Activated CD4-positive, alpha-beta memory T cell treated with anti-CD3 and anti-CD28 coated beads, Interleukin-2, amount 10 ng/mL, durations not matched to agents 7 days and 5 days (primary cell): ENCODE measurements at regions of chr20 and their contacts with region 1.

Region 1: DNA sequence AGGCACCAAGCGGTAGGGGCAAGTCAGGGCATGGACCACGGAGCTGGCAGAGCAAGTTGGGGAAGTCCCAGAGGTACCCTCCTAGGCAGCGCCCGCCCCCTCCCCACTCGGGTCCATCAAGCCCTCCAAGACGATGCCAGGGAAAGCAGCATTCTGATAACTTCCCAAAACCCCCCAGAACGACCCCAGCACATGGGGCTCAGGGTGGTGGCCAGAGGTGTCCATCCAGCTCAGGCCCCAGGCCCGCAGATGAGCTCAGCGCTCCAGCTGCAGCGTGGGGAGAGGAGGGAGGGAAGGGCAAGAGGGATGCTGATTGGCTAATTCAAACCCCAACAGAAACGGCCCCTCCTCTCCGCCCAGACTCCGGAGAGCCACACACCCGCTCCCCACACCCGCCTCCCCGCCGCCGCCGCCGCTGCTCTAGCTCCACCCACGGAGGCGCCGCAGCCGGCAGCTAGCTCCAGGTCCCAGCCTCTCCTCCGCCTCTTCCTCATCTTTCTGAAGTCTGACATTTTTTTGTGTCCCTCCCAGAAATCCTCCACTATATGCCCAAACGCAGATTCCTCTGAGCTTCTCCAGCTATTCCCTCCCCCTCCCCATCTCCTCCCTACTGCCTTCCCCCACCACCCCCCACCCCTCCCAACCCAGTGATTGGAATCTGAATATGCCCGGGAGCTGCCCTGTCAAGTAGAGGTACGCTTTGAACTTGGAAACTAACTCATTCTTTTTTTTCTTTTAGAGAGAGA is 40.3 kb upstream of the TLDC2 start:
- DNase-seq: peak; percentile 92
- H3K4me3 Mint-ChIP-seq: peak overlapping the region; percentile 82
- H3K27ac Mint-ChIP-seq: peak overlapping the region; percentile 87
- H3K4me1 Mint-ChIP-seq: peaks cover 27% of the 10 kb centered on the region
- H3K27me3 Mint-ChIP-seq: no peaks in the 10 kb centered on the region

Region 2: DNA sequence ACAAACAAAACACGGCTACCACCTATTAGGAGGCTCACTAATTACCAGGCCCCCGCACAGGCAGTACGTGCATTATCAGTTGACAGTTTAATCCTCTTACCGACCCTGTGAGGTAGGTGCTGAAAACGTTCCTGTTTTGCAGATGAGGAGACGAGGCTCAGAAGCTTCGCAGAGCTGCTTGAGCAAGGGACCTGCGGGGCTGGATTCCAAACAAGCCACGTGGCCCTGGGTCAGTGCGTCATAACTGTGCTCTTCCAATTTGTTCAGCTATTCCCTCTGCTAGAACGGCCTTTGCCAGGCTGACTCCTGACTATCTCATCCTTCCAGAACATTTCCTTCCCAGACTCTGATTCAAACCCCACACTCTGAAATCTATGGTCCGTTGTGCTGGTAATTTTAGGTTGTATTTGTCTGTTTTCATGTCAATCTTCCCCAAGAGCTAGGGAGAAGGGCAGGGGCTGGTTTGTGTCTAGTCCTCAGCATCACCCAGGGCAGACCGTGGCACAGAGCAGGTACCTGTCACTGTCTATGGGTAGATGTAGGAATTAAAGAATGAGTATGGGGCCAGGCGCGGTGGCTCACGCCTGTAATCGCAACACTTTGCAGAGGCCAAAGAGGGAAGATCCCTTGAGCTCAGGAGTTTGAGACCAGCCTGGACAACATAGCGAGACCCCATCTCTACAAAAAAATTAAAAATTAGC is 11.5 kb after region 1 on chr20:
- CTCF ChIA-PET with region 1: interaction called, 13 read pairs
- POLR2A ChIA-PET with region 1: interaction called, 6 read pairs
- DNase-seq: no peak
- H3K4me3 Mint-ChIP-seq: no peak overlapping the region
- H3K27ac Mint-ChIP-seq: no peak overlapping the region
- H3K4me1 Mint-ChIP-seq: peaks cover 9% of the 10 kb centered on the region
- H3K27me3 Mint-ChIP-seq: no peaks in the 10 kb centered on the region

Region 3: DNA sequence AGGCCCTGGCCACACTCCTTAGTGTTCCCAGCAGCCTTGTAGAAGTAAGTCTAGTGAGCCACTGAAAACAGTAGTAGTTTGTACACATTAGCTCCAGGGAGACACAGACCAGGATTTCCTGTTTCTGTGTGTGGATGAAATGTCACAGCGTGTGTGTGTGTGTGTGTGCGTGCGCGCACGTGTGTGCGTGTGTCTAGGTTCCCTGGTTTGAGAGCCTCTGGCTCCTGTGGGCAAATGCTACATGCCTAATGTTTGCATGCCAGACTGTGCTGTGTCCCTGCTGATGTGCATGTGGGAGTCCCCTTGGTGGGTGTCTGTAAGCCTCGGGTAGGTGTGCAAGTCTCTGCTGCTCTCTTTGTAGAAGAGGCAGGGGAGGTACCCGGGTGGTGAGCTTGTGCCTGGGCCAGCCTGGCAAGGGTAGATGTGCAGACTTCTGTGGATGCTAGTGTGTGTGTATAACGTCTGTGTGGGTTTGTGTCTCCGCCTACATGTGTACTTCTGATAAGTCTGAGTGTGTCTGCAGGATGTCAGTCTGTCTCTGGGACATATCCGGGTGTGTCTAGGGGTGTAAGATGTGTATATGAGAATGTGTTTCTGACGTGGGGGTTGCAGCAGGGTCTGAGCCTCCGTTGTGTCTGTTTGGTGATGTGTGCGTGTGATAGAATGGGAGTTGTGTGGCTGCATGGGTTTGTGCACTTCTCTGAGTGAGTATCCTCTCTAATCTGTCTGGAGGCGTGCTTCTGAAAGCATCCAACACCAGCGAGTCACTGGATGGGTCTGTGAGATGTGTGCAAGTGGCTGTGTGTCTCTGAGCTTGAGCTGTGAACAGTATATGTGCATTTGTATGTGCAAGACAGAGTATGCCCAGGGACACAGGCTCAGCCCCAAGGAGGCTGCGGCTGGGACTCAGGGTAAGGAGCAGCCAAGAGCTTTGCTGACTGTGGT is 21.3 kb after region 1 on chr20:
- CTCF ChIA-PET with region 1: interaction called, 13 read pairs
- POLR2A ChIA-PET with region 1: interaction called, 6 read pairs
- DNase-seq: peak; percentile 57
- H3K4me3 Mint-ChIP-seq: no peak overlapping the region
- H3K27ac Mint-ChIP-seq: peak overlapping the region; percentile 41
- H3K4me1 Mint-ChIP-seq: peaks cover 12% of the 10 kb centered on the region
- H3K27me3 Mint-ChIP-seq: peaks cover 18% of the 10 kb centered on the region

Region 4: DNA sequence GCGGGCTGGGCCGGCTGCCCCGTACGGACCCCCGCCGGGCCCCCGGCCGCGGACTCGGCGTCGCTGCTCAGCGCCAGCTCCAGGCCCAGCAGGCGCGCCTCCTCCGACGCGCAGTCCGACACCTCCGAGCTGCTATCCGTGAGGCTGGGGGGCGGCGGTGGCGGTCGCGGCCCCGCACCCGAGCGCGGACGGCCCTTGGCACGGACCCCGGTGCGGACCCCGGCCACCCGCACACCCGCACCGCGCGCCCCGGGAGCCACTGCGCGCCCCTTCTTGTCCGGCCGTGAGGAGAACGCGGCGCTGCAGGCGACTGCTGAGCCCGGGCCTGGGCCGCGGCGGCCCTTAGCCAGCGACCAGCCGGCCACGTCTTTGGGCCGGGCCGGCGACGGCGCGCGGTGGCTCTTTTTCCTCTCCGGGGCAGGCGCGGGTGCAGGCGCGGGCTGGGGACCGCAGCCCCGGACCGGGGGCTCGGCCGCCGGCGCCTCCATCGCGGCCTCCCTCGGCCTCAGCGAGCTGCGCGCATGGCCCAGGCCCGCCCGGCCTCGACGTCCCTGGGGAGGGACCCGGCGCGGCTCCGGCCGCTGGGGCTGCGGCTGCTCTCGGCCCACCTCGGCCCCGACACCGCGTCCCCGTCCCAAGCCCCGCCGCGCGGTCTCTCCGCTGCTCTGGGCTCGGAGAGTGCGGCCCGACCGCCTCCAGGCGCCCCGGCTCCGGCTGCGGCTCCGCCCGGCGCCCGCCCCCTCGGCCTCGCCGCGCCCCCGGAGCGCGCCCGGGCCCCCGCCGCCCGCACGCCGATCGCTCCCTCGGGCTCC is 27.4 kb after region 1 on chr20:
- CTCF ChIA-PET with region 1: interaction called, 14 read pairs
- POLR2A ChIA-PET with region 1: interaction called, 3 read pairs
- DNase-seq: no peak
- H3K4me3 Mint-ChIP-seq: no peak overlapping the region
- H3K27ac Mint-ChIP-seq: no peak overlapping the region
- H3K4me1 Mint-ChIP-seq: peaks cover 15% of the 10 kb centered on the region
- H3K27me3 Mint-ChIP-seq: peaks cover 46% of the 10 kb centered on the region

Region 5: GRCh38 chr20:36880741-36881250 is 45.2 kb after region 1 on chr20:
- CTCF ChIA-PET with region 1: no interaction called
- POLR2A ChIA-PET with region 1: no interaction called
- DNase-seq: no peak
- H3K4me3 Mint-ChIP-seq: no peak overlapping the region
- H3K27ac Mint-ChIP-seq: no peak overlapping the region
- H3K4me1 Mint-ChIP-seq: peaks cover 3% of the 10 kb centered on the region
- H3K27me3 Mint-ChIP-seq: no peaks in the 10 kb centered on the region